CD4-positive, alpha-beta T cell (primary cell): ENCODE measurements at regions of chr5 and their contacts with region 1.

Region 1: GRCh38 chr5:56838409-56839039 is 23.2 kb downstream of the MAP3K1 start:
- DNase-seq: peak in 4 of 14 experiments; percentile 20 to 81 (median 77)
- ATAC-seq: peak; percentile 66
- H3K4me3 ChIP-seq: no peak overlapping the region
- H3K4me3 Mint-ChIP-seq: peak overlapping the region; percentile 74
- H3K27ac ChIP-seq: peak overlapping the region in 1 of 2 donors; percentile 38
- H3K27ac Mint-ChIP-seq: peak overlapping the region; percentile 81
- H3K4me1 ChIP-seq: peaks cover 51% of the 10 kb centered on the region
- H3K4me1 Mint-ChIP-seq: peaks cover 92% of the 10 kb centered on the region
- H3K27me3 ChIP-seq: no peaks in the 10 kb centered on the region
- H3K27me3 Mint-ChIP-seq: no peaks in the 10 kb centered on the region
- CTCF ChIP-seq: peak; percentile 72

Region 2: DNA sequence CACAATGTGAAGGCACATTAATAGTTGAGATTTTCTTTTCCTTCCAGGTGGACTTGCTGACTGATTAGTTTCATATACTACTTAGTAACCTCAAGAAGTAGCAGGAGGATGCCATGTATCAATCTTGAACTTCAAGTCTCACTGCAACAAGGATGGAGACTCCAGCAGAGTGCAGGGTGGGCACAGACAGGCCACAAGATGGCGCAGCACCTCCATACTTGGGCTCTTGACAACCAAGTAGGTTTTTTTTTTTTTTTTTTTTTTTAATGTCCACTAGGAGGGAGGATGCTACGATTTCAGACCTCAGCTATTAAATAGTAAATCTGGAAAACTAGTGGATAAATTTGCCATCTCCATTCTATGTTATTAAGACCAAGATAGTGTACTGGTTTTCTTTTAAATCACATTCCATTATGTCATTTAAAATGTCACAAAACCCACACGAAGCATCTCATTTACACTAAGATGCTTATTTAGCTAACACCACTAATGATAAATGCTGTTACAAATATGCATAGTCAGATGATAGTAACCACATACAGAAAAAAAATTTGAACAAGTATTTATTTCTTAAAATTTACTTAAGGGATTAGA is 902.3 kb before region 1 on chr5:
- CTCF ChIA-PET with region 1: interaction called, 3 read pairs
- POLR2A ChIA-PET with region 1: no interaction called
- intact Hi-C with region 1: loop called in 1 of 2 experiments (anchors 2 kb)
- DNase-seq: peak; percentile 64 to 90 (median 71)
- ATAC-seq: peak; percentile 77
- H3K4me3 ChIP-seq: no peak overlapping the region
- H3K4me3 Mint-ChIP-seq: peak overlapping the region; percentile 25
- H3K27ac ChIP-seq: no peak overlapping the region
- H3K27ac Mint-ChIP-seq: peak overlapping the region; percentile 62
- H3K4me1 ChIP-seq: no peaks in the 10 kb centered on the region
- H3K4me1 Mint-ChIP-seq: peaks cover 46% of the 10 kb centered on the region
- H3K27me3 ChIP-seq: no peaks in the 10 kb centered on the region
- H3K27me3 Mint-ChIP-seq: no peaks in the 10 kb centered on the region
- CTCF ChIP-seq: peak; percentile 84

Region 3: GRCh38 chr5:55969956-55970355 is 868.6 kb before region 1 on chr5:
- CTCF ChIA-PET with region 1: no interaction called
- POLR2A ChIA-PET with region 1: no interaction called
- intact Hi-C with region 1: loop called in 1 of 2 experiments (anchors 10 kb)
- DNase-seq: no peak
- ATAC-seq: no peak
- H3K4me3 ChIP-seq: no peak overlapping the region
- H3K4me3 Mint-ChIP-seq: peak overlapping the region; percentile 55
- H3K27ac ChIP-seq: peak overlapping the region in 1 of 2 donors; percentile 29
- H3K27ac Mint-ChIP-seq: peak overlapping the region; percentile 10
- H3K4me1 ChIP-seq: peaks cover 20% of the 10 kb centered on the region
- H3K4me1 Mint-ChIP-seq: peaks cover 70% of the 10 kb centered on the region
- H3K27me3 ChIP-seq: no peaks in the 10 kb centered on the region
- H3K27me3 Mint-ChIP-seq: no peaks in the 10 kb centered on the region
- CTCF ChIP-seq: no peak

Region 4: GRCh38 chr5:55982957-55983381 is 855.6 kb before region 1 on chr5:
- CTCF ChIA-PET with region 1: interaction called, 3 read pairs
- POLR2A ChIA-PET with region 1: no interaction called
- intact Hi-C with region 1: loop called (anchors 1 to 10 kb)
- DNase-seq: peak in 7 of 14 experiments; percentile 18 to 71 (median 38)
- ATAC-seq: peak; percentile 44
- H3K4me3 ChIP-seq: peak overlapping the region; percentile 11
- H3K4me3 Mint-ChIP-seq: peak overlapping the region; percentile 72
- H3K27ac ChIP-seq: peak overlapping the region in 1 of 2 donors; percentile 10
- H3K27ac Mint-ChIP-seq: peak overlapping the region; percentile 94
- H3K4me1 ChIP-seq: peaks cover 31% of the 10 kb centered on the region
- H3K4me1 Mint-ChIP-seq: peaks cover 90% of the 10 kb centered on the region
- H3K27me3 ChIP-seq: no peaks in the 10 kb centered on the region
- H3K27me3 Mint-ChIP-seq: no peaks in the 10 kb centered on the region
- CTCF ChIP-seq: peak; percentile 66

Region 5: GRCh38 chr5:56200856-56201666 is 637.5 kb before region 1 on chr5:
- CTCF ChIA-PET with region 1: interaction called, 8 read pairs
- POLR2A ChIA-PET with region 1: no interaction called
- intact Hi-C with region 1: loop called in 1 of 2 experiments (anchors 5 kb)
- DNase-seq: peak; percentile 39 to 86 (median 50)
- ATAC-seq: peak; percentile 95
- H3K4me3 ChIP-seq: no peak overlapping the region
- H3K4me3 Mint-ChIP-seq: no peak overlapping the region
- H3K27ac ChIP-seq: no peak overlapping the region
- H3K27ac Mint-ChIP-seq: peak overlapping the region; percentile 2
- H3K4me1 ChIP-seq: peaks cover 6% of the 10 kb centered on the region
- H3K4me1 Mint-ChIP-seq: peaks cover 34% of the 10 kb centered on the region
- H3K27me3 ChIP-seq: no peaks in the 10 kb centered on the region
- H3K27me3 Mint-ChIP-seq: no peaks in the 10 kb centered on the region
- CTCF ChIP-seq: peak; percentile 85

Region 6: GRCh38 chr5:56481428-56482357 is 356.8 kb before region 1 on chr5:
- CTCF ChIA-PET with region 1: interaction called, 4 read pairs
- POLR2A ChIA-PET with region 1: interaction called, 21 read pairs
- intact Hi-C with region 1: loop called in 1 of 2 experiments (anchors 5 kb)
- DNase-seq: peak in 9 of 14 experiments; percentile 8 to 58 (median 31)
- ATAC-seq: no peak
- H3K4me3 ChIP-seq: peak overlapping the region; percentile 69
- H3K4me3 Mint-ChIP-seq: peak overlapping the region; percentile 94
- H3K27ac ChIP-seq: peak overlapping the region; percentile 80
- H3K27ac Mint-ChIP-seq: peak overlapping the region; percentile 89
- H3K4me1 ChIP-seq: peaks cover 52% of the 10 kb centered on the region
- H3K4me1 Mint-ChIP-seq: peaks cover 49% of the 10 kb centered on the region
- H3K27me3 ChIP-seq: no peaks in the 10 kb centered on the region
- H3K27me3 Mint-ChIP-seq: no peaks in the 10 kb centered on the region
- CTCF ChIP-seq: peak; percentile 46

Region 7: GRCh38 chr5:56827049-56827448 is 11.5 kb before region 1 on chr5:
- CTCF ChIA-PET with region 1: interaction called, 20 read pairs
- POLR2A ChIA-PET with region 1: interaction called, 23 read pairs
- intact Hi-C with region 1: no loop called
- DNase-seq: peak in 3 of 14 experiments; percentile 51 to 62 (median 53)
- ATAC-seq: peak; percentile 27
- H3K4me3 ChIP-seq: no peak overlapping the region
- H3K4me3 Mint-ChIP-seq: peak overlapping the region; percentile 54
- H3K27ac ChIP-seq: no peak overlapping the region
- H3K27ac Mint-ChIP-seq: peak overlapping the region; percentile 94
- H3K4me1 ChIP-seq: peaks cover 70% of the 10 kb centered on the region
- H3K4me1 Mint-ChIP-seq: peaks cover 97% of the 10 kb centered on the region
- H3K27me3 ChIP-seq: no peaks in the 10 kb centered on the region
- H3K27me3 Mint-ChIP-seq: no peaks in the 10 kb centered on the region
- CTCF ChIP-seq: peak; percentile 14